HepG2 (cell line): ENCODE measurements at regions of chr2 and their contacts with region 1.

Region 1: DNA sequence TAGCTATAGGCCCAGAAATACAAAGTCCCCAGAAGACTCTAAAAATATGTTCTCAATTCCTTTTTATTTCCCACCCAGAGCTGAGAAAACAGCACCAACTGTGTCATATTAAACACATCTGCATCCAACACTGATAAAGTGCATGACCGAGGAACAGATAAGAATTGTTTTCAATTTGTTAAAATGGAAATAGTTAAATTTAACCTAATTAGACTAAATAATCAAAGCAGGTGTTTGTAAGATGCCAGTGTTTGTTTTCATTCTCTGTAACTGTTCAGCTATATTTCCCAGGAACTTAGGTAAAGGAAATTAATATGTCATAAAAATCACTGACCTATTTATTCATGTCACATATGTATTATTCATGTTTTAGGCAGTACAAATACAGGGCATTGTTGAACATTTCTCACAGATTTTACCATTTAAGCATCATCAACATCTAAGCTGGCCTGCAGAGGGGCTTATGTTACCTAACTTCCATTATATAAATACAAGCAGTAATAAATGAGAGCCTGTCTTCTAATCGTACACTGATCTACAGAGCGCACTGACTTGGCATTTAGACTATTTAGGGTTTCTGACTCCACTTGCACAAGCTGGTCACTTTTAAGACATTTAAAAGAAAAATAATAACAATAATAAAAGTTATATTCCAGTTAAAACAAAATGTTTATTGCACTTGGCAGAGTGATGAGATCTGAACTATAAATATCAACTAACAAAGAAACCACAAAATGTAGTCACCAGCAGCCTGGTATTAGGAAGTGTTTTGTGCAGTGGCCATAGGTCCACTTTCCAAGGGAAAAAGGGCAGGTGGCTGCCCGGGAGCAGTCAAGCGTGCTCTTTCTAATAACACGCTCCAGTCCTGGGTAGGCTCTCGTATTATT is 86.6 kb upstream of the ZFP36L2 start:
- DNase-seq: no peak
- ATAC-seq: peak; percentile 27
- H3K4me3 ChIP-seq: no peak overlapping the region
- H3K27ac ChIP-seq: peak overlapping the region; percentile 2
- H3K4me1 ChIP-seq: peaks cover 64% of the 10 kb centered on the region
- H3K27me3 ChIP-seq: no peaks in the 10 kb centered on the region
- CTCF ChIP-seq: no peak
- EP300 ChIP-seq: no peak
- POLR2A ChIP-seq: no peak
- RAD21 ChIP-seq: no peak

Region 2: DNA sequence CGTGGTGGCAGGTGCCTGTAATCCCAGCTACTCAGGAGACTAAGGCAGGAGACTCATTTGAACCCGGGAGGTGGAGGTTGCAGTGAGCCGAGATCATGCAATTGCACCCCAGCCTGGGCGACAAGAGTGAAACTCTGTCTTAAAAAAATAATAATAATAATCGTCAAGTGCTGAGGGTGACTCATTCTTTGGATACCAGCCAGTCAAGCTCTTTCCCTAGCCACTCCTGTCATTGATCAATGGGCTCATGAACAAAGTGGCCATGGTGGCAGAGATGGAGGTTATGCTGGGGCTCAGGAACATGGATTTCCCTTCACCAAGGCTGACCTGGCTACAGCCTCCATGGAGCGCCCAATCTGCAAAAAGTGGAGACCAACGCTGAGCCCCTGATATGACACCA is 426.1 kb before region 1 on chr2:
- CTCF ChIA-PET with region 1: no interaction called
- POLR2A ChIA-PET with region 1: no interaction called
- in situ Hi-C with region 1: no loop called
- intact Hi-C with region 1: no loop called
- DNase-seq: no peak
- ATAC-seq: no peak
- H3K4me3 ChIP-seq: no peak overlapping the region
- H3K27ac ChIP-seq: no peak overlapping the region
- H3K4me1 ChIP-seq: 0 out of 2 replicates have a peak, but pooled peaks cover 5% of the 10 kb centered on the region
- H3K27me3 ChIP-seq: no peaks in the 10 kb centered on the region
- CTCF ChIP-seq: no peak
- EP300 ChIP-seq: no peak
- POLR2A ChIP-seq: no peak
- RAD21 ChIP-seq: no peak

Region 3: DNA sequence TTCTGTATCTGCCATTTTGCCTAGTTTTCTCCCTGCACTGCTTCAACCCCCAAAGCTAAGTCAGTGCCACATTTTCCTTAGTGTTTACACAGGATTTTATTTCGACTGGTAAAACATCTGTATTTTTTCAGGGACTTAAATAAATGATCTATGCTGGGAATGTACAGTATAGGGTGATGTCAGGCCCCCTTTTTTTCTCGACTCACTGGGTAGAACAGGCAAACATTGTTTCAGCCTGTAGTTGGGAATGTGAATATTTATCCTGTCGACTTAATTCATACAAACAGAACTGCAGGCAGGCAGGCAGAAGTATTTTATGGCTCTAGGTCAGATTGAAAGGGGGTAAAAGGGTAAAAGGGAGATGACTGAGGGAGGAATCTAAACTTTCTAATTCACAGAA is 36.9 kb after region 1 on chr2:
- CTCF ChIA-PET with region 1: no interaction called
- POLR2A ChIA-PET with region 1: no interaction called
- in situ Hi-C with region 1: no loop called
- intact Hi-C with region 1: loop called (anchors 5 kb)
- DNase-seq: peak; percentile 90
- ATAC-seq: peak; percentile 87
- H3K4me3 ChIP-seq: no peak overlapping the region; a peak in 1 of 6 replicates
- H3K27ac ChIP-seq: peak overlapping the region; percentile 45
- H3K4me1 ChIP-seq: peaks cover 46% of the 10 kb centered on the region
- H3K27me3 ChIP-seq: no peaks in the 10 kb centered on the region
- CTCF ChIP-seq: no peak
- EP300 ChIP-seq: no peak
- POLR2A ChIP-seq: no peak
- RAD21 ChIP-seq: no peak

Region 4: GRCh38 chr2:43455731-43456642 is 143.0 kb after region 1 on chr2:
- CTCF ChIA-PET with region 1: no interaction called
- POLR2A ChIA-PET with region 1: no interaction called
- in situ Hi-C with region 1: no loop called
- intact Hi-C with region 1: loop called (anchors 10 kb)
- DNase-seq: peak; percentile 91
- ATAC-seq: peak; percentile 95
- H3K4me3 ChIP-seq: no peak overlapping the region
- H3K27ac ChIP-seq: peak overlapping the region; percentile 62
- H3K4me1 ChIP-seq: peaks cover 99% of the 10 kb centered on the region
- H3K27me3 ChIP-seq: no peaks in the 10 kb centered on the region
- CTCF ChIP-seq: peak; percentile 71
- EP300 ChIP-seq: peak in 1 of 2 experiments; percentile 77; a peak in 2 of 4 replicates
- POLR2A ChIP-seq: no peak
- RAD21 ChIP-seq: peak; percentile 27; the same call in 1 of the 2 replicates